AG04450 (cell line): ENCODE measurements at regions of chr10 and their contacts with region 1.

Region 1: DNA sequence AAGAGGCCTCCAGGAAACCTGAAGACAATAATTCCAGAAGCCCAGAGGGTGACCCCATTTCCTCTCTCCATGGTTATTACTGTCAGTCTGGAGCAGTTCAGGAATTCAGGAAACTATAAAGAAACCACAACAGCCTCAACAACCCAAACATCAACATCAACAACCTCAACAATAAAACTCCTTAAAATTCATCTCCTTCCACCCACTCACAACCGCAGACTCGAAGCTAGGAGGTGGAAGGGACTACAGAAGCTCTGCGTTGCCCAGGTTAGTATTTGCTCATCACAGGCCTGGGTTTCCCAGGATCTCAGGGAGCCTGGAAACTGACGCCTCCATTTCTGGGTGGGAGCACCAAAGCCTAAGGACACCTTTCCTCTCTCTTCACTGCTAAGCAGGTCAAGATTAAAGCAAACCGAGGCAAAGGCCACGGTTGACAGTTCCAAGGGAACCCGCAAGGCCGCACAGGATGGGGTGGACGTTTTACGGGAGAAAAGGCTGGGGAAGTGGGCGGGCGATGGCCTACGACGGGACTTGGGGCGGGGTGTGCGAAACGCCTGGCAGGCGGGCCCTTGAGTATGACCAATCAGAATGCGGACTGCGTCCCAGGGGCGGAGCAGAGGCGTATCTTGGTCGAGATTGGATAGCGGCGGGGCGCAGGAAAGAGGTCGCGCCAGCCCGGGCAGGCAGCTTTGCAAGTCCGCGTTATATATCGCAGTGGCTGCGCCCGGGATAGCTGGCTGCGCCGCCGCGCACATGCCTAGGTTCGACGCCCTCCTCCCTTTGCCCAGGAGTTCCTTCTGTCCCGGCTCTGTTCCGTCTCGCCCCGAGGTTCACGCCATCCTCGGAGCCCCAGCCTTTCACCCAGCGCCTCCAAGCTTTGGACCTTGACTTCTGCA is at the start of gene ELOVL3:
- DNase-seq: peak; percentile 81
- H3K4me3 ChIP-seq: peak within 1 kb of the TSS; percentile 49
- H3K27ac ChIP-seq: peak within 1 kb of the TSS; percentile 49
- H3K27me3 ChIP-seq: peaks cover 31% of the 10 kb centered on the region
- CTCF ChIP-seq: no peak
- polyA plus RNA-seq, gene ELOVL3: 0.16 and 0.27 TPM in 2 replicates

Region 2: GRCh38 chr10:102245101-102245931 is 19.4 kb after region 1 on chr10 and contains the start of gene GBF1:
- CTCF ChIA-PET with region 1: interaction called, 38 read pairs
- POLR2A ChIA-PET with region 1: interaction called, 4 read pairs
- DNase-seq: peak; percentile 99
- H3K4me3 ChIP-seq: peak within 1 kb of the TSS; percentile 100
- H3K27ac ChIP-seq: peak within 1 kb of the TSS; percentile 83
- H3K27me3 ChIP-seq: peaks cover 6% of the 10 kb centered on the region
- CTCF ChIP-seq: no peak
- polyA plus RNA-seq, gene GBF1: 31.9 and 43.8 TPM in 2 replicates

Region 3: DNA sequence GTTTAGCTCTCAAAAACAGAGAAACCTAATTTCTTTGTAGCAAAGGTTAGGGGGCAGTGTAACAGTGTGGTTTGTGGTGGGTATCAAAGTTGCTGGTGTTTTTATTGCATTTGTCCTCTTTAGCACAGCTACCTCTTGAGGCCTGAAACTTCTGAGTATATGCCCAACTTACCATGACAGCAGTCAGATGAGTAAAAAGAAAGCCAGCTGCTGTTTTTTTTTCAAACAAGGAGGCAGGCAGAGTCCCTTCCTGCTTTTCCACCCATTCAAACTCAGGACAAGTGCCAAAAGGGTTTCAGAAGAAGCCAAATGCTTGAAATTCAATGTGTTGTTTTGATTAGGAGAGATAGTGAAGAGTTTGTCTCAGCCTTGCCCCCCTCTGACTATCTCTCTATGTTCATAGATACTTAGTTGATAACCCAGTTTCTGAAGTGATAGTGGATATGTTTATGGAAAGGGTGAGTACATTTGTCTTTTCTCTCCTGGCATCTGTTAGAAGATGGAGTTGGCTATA is 42.5 kb after region 1 on chr10:
- CTCF ChIA-PET with region 1: interaction called, 4 read pairs
- POLR2A ChIA-PET with region 1: interaction called, 10 read pairs
- DNase-seq: no peak
- H3K4me3 ChIP-seq: no peak overlapping the region
- H3K27ac ChIP-seq: peak overlapping the region; percentile 48
- H3K27me3 ChIP-seq: no peaks in the 10 kb centered on the region
- CTCF ChIP-seq: no peak; the same call in 1 of the 2 replicates

Region 4: DNA sequence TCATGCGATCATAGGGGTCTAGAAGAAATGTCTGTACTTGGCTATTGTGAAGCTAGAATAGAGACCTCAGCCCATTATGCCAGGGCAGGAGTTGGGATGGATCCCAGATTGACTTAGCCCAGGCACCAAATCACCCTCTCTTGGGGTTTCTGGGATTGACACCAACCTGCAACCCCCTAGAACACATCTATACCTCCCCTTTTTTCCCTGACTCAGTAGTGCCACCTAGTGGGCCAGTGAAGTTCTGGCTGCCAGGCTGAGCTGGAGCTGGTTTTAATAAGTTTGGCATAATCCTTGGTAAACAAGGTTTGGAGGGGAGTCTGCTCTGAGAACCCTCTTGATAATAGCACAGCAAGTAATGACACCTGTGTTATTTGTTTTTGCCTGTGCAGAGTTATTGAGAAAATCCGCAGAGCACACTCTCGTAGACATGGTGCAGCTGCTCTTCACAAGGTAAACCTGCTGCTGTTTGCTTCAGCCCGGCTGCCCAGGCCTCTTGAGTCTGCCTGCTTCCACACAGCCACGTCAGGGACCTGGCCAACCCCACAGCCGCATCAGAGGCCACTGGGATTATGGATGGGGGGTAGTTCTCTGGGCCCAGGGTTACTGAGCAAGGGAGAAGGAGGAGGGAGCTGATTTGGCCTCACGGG is 126.3 kb after region 1 on chr10:
- CTCF ChIA-PET with region 1: interaction called, 442 read pairs
- POLR2A ChIA-PET with region 1: interaction called, 6 read pairs
- DNase-seq: peak; percentile 20
- H3K4me3 ChIP-seq: no peak overlapping the region
- H3K27ac ChIP-seq: no peak overlapping the region
- H3K27me3 ChIP-seq: no peaks in the 10 kb centered on the region
- CTCF ChIP-seq: peak; percentile 98

Region 5: GRCh38 chr10:102394079-102394800 is 168.3 kb after region 1 on chr10:
- CTCF ChIA-PET with region 1: interaction called, 24 read pairs
- POLR2A ChIA-PET with region 1: interaction called, 3 read pairs
- DNase-seq: peak; percentile 82
- H3K4me3 ChIP-seq: peak overlapping the region; percentile 82
- H3K27ac ChIP-seq: peak overlapping the region; percentile 99
- H3K27me3 ChIP-seq: peaks cover 3% of the 10 kb centered on the region
- CTCF ChIP-seq: no peak